ENCODE measurements at regions of chr3 and their contacts with region 1.

Region 1: GRCh38 chr3:156723182-156723619 is 48.8 kb downstream of the TIPARP start:
- DNase-seq: no peak
- ATAC-seq: peak; percentile 55
- H3K4me3 ChIP-seq: no peak overlapping the region
- H3K27ac ChIP-seq: no peak overlapping the region
- H3K4me1 ChIP-seq: no peaks in the 10 kb centered on the region
- H3K27me3 ChIP-seq: no peaks in the 10 kb centered on the region
- CTCF ChIP-seq: no peak
- EP300 ChIP-seq: no peak
- POLR2A ChIP-seq: no peak
- RAD21 ChIP-seq: no peak

Region 2: GRCh38 chr3:156702367-156702766 is 20.8 kb before region 1 on chr3:
- CTCF ChIA-PET with region 1: interaction called, 12 read pairs
- POLR2A ChIA-PET with region 1: no interaction called
- RAD21 ChIA-PET with region 1: no interaction called
- SMC1A ChIA-PET with region 1: interaction called, 3 read pairs
- in situ Hi-C with region 1: no loop called
- intact Hi-C with region 1: no loop called
- DNase-seq: no peak
- ATAC-seq: no peak
- H3K4me3 ChIP-seq: no peak overlapping the region
- H3K27ac ChIP-seq: no peak overlapping the region
- H3K4me1 ChIP-seq: peaks cover 10% of the 10 kb centered on the region; the same call in 1 of the 2 replicates
- H3K27me3 ChIP-seq: no peaks in the 10 kb centered on the region
- CTCF ChIP-seq: no peak
- EP300 ChIP-seq: no peak
- POLR2A ChIP-seq: no peak
- RAD21 ChIP-seq: no peak

Region 3: DNA sequence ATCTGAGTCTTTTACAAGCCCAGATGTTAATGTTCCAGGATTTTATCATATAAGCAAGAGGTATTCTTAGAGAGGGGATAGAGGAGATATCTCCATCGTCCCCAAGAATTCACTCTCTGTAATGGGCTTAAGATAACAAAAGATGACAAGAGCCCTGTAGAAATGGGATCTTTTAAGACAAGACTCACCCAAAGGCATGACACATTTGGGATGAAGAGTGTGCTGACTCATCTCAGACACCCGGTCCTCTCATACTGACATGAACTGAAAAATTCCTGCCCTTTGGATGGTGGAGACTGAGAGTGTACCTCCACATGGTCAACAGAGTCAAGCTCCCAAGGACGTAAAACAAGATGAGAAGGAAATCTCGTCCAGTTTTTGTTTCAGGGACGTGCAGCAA is 113.9 kb after region 1 on chr3:
- CTCF ChIA-PET with region 1: no interaction called
- POLR2A ChIA-PET with region 1: no interaction called
- RAD21 ChIA-PET with region 1: no interaction called
- SMC1A ChIA-PET with region 1: no interaction called
- in situ Hi-C with region 1: no loop called
- intact Hi-C with region 1: no loop called
- DNase-seq: no peak
- ATAC-seq: no peak
- H3K4me3 ChIP-seq: no peak overlapping the region
- H3K27ac ChIP-seq: no peak overlapping the region
- H3K4me1 ChIP-seq: peaks cover 4% of the 10 kb centered on the region; the same call in 1 of the 2 replicates
- H3K27me3 ChIP-seq: no peaks in the 10 kb centered on the region
- CTCF ChIP-seq: no peak
- EP300 ChIP-seq: no peak
- POLR2A ChIP-seq: no peak
- RAD21 ChIP-seq: no peak

Region 4: GRCh38 chr3:156918746-156919145 is 195.5 kb after region 1 on chr3:
- CTCF ChIA-PET with region 1: no interaction called
- POLR2A ChIA-PET with region 1: no interaction called
- RAD21 ChIA-PET with region 1: no interaction called
- SMC1A ChIA-PET with region 1: no interaction called
- in situ Hi-C with region 1: no loop called
- intact Hi-C with region 1: no loop called
- DNase-seq: no peak
- ATAC-seq: no peak
- H3K4me3 ChIP-seq: no peak overlapping the region
- H3K27ac ChIP-seq: no peak overlapping the region
- H3K4me1 ChIP-seq: no peaks in the 10 kb centered on the region
- H3K27me3 ChIP-seq: no peaks in the 10 kb centered on the region
- CTCF ChIP-seq: no peak
- EP300 ChIP-seq: no peak
- POLR2A ChIP-seq: no peak
- RAD21 ChIP-seq: no peak

Measured in GM12878 (cell line).